ENCODE measurements at regions of chr19 and their contacts with region 1.

Region 1: DNA sequence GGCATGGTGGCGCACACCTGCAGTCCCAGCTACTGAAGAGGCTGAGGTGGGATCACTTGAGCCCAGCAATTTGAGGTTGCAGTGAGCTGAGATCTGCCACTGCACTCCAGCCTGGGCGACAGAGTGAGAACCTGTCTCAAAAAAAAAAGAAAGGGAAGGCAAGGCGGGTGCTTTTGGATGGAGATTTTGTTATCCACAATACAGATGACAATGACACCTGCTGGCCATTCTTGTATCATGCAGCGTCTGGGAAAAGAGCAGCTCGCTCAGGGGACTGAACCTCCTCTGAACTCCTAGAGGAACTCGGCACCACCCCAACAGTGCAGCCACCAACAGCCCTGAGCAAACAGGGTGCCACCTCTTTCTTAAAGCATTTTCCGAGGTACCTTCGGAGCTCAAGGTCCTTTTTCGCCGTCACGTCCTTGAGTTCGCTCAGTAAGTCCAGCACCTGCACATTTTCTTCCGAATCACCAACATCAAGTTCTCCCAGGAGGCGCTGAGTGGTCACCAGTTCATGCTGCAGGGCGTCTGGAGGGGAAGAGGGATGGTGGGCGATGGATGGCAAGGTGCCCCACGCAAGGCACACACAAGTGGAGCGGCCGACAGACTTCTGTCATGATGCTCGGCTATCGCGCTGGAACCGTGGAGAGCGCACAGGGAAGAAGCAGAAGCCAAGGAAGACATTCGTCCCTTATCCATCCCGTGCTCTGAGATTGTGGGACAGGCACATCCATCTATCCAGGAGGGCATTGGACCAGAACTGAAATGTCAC is 22.6 kb downstream of the HAUS8 start:
- DNase-seq: peak; percentile 62
- H3K4me3 ChIP-seq: no peak overlapping the region; a peak in 1 of 4 replicates
- H3K27ac ChIP-seq: no peak overlapping the region
- H3K4me1 ChIP-seq: no peaks in the 10 kb centered on the region
- H3K27me3 ChIP-seq: no peaks in the 10 kb centered on the region
- CTCF ChIP-seq: peak; percentile 66
- EP300 ChIP-seq: no peak
- RAD21 ChIP-seq: peak; percentile 69

Region 2: GRCh38 chr19:16771618-16772017 is 281.0 kb before region 1 on chr19:
- CTCF ChIA-PET with region 1: interaction called, 28 read pairs
- POLR2A ChIA-PET with region 1: no interaction called
- DNase-seq: peak; percentile 81
- H3K4me3 ChIP-seq: peak overlapping the region in 1 of 2 experiments; percentile 18; a peak in 1 of 4 replicates
- H3K27ac ChIP-seq: no peak overlapping the region
- H3K4me1 ChIP-seq: no peaks in the 10 kb centered on the region
- H3K27me3 ChIP-seq: peaks cover 20% of the 10 kb centered on the region; the same call in 1 of the 2 replicates
- CTCF ChIP-seq: peak; percentile 85
- EP300 ChIP-seq: no peak
- RAD21 ChIP-seq: peak; percentile 89

Region 3: GRCh38 chr19:16778796-16779411 is 273.7 kb before region 1 on chr19:
- CTCF ChIA-PET with region 1: interaction called, 28 read pairs
- POLR2A ChIA-PET with region 1: no interaction called
- DNase-seq: peak; percentile 52
- H3K4me3 ChIP-seq: peak overlapping the region in 1 of 2 experiments; percentile 12; a peak in 1 of 4 replicates
- H3K27ac ChIP-seq: no peak overlapping the region
- H3K4me1 ChIP-seq: no peaks in the 10 kb centered on the region
- H3K27me3 ChIP-seq: peaks cover 14% of the 10 kb centered on the region; the same call in 1 of the 2 replicates
- CTCF ChIP-seq: peak; percentile 62
- EP300 ChIP-seq: no peak
- RAD21 ChIP-seq: peak; percentile 72

Measured in SK-N-SH (cell line).